IMR-90 (cell line): ENCODE measurements at regions of chrX and their contacts with region 1.

Region 1: DNA sequence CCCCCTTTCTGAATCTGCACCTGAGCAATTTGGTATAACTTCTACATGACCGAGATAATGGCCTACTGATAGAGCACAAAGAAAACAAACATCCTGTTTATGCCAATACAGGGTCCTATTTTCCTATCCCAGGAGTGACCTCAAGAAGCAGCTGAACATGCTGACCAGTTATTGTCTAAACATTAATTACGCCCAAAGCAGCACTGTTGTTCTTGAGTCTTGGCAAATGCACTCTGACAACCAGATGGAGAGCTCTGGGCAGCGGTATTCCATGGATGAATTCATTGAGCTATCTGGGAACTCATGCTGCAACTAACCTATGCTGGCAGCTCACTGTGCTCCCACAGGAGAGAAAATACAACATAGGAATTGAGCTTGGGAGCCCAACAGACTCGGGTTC is 52.6 kb downstream of the PCYT1B start:
- DNase-seq: no peak
- ATAC-seq: no peak
- H3K4me3 ChIP-seq: no peak overlapping the region
- H3K27ac ChIP-seq: no peak overlapping the region
- H3K4me1 ChIP-seq: no peaks in the 10 kb centered on the region
- H3K27me3 ChIP-seq: peaks cover 2% of the 10 kb centered on the region; the same call in 1 of the 2 replicates
- CTCF ChIP-seq: no peak
- POLR2A ChIP-seq: no peak
- RAD21 ChIP-seq: no peak

Region 2: GRCh38 chrX:25337841-25338240 is 743.3 kb after region 1 on chrX:
- CTCF ChIA-PET with region 1: no interaction called
- POLR2A ChIA-PET with region 1: no interaction called
- dilution Hi-C with region 1: no loop called
- in situ Hi-C with region 1: no loop called
- intact Hi-C with region 1: loop called (anchors 10 kb)
- DNase-seq: no peak
- ATAC-seq: no peak
- H3K4me3 ChIP-seq: no peak overlapping the region
- H3K27ac ChIP-seq: no peak overlapping the region
- H3K4me1 ChIP-seq: no peaks in the 10 kb centered on the region
- H3K27me3 ChIP-seq: no peaks in the 10 kb centered on the region
- CTCF ChIP-seq: no peak
- POLR2A ChIP-seq: no peak
- RAD21 ChIP-seq: no peak